ENCODE measurements at regions of chr19 and their contacts with region 1.

Region 1: GRCh38 chr19:42529248-42529764 is 1.0 kb upstream of the CEACAM1 start:
- DNase-seq: peak; percentile 77
- H3K4me3 ChIP-seq: no peak overlapping the region; a peak in 1 of 4 replicates
- H3K27ac ChIP-seq: no peak overlapping the region
- H3K4me1 ChIP-seq: no peaks in the 10 kb centered on the region; a peak in 1 of 4 replicates
- H3K27me3 ChIP-seq: no peaks in the 10 kb centered on the region
- CTCF ChIP-seq: peak; percentile 86
- EP300 ChIP-seq: no peak
- RAD21 ChIP-seq: peak; percentile 79

Region 2: GRCh38 chr19:42450314-42450934 is 78.9 kb before region 1 on chr19:
- CTCF ChIA-PET with region 1: interaction called, 86 read pairs
- POLR2A ChIA-PET with region 1: interaction called, 4 read pairs
- DNase-seq: peak; percentile 75
- H3K4me3 ChIP-seq: no peak overlapping the region; a peak in 1 of 4 replicates
- H3K27ac ChIP-seq: no peak overlapping the region
- H3K4me1 ChIP-seq: peaks cover 0 to 3% of the 10 kb centered on the region in 2 experiments; a peak in 2 of 4 replicates
- H3K27me3 ChIP-seq: no peaks in the 10 kb centered on the region; the same call in 1 of the 2 replicates
- CTCF ChIP-seq: peak; percentile 93
- EP300 ChIP-seq: no peak
- RAD21 ChIP-seq: peak; percentile 96

Region 3: GRCh38 chr19:42497492-42498168 is 31.7 kb before region 1 on chr19:
- CTCF ChIA-PET with region 1: interaction called, 13 read pairs
- POLR2A ChIA-PET with region 1: no interaction called
- DNase-seq: no peak
- H3K4me3 ChIP-seq: no peak overlapping the region
- H3K27ac ChIP-seq: no peak overlapping the region
- H3K4me1 ChIP-seq: no peaks in the 10 kb centered on the region; a peak in 1 of 4 replicates
- H3K27me3 ChIP-seq: no peaks in the 10 kb centered on the region
- CTCF ChIP-seq: no peak
- EP300 ChIP-seq: no peak
- RAD21 ChIP-seq: no peak

Region 4: GRCh38 chr19:42514449-42514848 is 14.9 kb before region 1 on chr19:
- CTCF ChIA-PET with region 1: interaction called, 49 read pairs
- POLR2A ChIA-PET with region 1: no interaction called
- DNase-seq: no peak
- H3K4me3 ChIP-seq: no peak overlapping the region
- H3K27ac ChIP-seq: no peak overlapping the region
- H3K4me1 ChIP-seq: no peaks in the 10 kb centered on the region
- H3K27me3 ChIP-seq: no peaks in the 10 kb centered on the region
- CTCF ChIP-seq: no peak
- EP300 ChIP-seq: no peak
- RAD21 ChIP-seq: no peak